ENCODE measurements at regions of chr10 and their contacts with region 1.

Region 1: DNA sequence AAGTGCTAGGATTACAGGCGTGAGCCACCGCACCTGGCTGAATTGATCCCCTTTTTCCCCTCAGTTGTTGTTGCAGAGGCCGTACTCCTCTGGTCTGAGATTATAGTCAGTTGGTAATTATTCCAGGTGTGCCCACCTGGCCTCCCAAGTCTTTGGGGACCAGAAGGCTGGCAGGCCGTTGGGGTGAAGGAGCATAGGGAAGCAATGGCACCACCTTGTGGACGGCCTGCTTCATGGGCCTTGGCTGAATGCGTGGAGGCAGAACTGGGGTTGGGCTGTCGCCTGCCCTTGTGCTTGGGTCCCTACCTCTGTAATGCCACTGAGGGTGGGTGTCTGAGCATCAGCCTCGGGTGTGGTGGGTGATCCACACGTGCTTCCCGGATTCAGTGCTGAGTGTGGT is 125.7 kb downstream of the RGS10 start:
- DNase-seq: peak; percentile 44 to 69 (median 62)
- ATAC-seq: peak; percentile 89
- H3K4me3 ChIP-seq: no peak overlapping the region
- H3K4me3 Mint-ChIP-seq: no peak overlapping the region
- H3K27ac ChIP-seq: no peak overlapping the region
- H3K27ac Mint-ChIP-seq: no peak overlapping the region
- H3K4me1 ChIP-seq: no peaks in the 10 kb centered on the region
- H3K4me1 Mint-ChIP-seq: peaks cover 0 to 5% (median 0%) of the 10 kb centered on the region in 7 donors
- H3K27me3 ChIP-seq: no peaks in the 10 kb centered on the region
- H3K27me3 Mint-ChIP-seq: no peaks in the 10 kb centered on the region

Region 2: DNA sequence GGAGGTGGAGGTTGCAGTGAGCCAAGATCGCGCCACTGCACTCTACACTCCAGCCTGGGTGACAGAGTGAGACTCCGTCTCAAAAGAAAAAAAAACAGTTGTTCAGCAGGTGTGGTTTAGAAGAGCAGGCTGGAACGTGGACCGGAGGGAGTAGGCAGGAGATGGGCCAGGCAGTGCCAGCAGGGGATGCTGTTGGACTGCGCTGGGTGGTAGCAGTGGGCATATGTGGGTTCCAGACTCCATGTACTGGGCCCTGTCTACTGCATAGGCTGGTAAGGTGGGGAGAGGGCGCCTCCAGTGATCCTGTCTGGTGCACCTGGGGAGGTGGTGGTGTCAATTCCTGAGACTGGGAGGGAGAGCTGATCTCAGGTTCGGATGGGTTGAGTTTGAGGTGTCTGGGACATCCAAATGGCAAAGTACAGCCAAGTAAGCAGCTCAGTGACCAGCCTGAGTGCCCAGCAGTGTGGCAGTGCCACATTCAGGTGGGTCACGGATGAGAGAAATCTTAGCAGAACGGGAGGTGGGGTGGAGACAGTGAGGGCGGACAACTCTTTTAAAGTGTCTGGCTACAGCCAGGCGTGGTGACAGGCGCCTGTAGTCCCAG is 277.3 kb before region 1 on chr10:
- CTCF ChIA-PET with region 1: no interaction called
- POLR2A ChIA-PET with region 1: no interaction called
- intact Hi-C with region 1: loop called (anchors 1 kb)
- DNase-seq: peak; percentile 18 to 58 (median 42)
- ATAC-seq: peak; percentile 85
- H3K4me3 ChIP-seq: no peak overlapping the region
- H3K4me3 Mint-ChIP-seq: no peak overlapping the region
- H3K27ac ChIP-seq: no peak overlapping the region
- H3K27ac Mint-ChIP-seq: peak overlapping the region; percentile 49 to 92 (median 62)
- H3K4me1 ChIP-seq: no peaks in the 10 kb centered on the region
- H3K4me1 Mint-ChIP-seq: peaks cover 5 to 26% (median 11%) of the 10 kb centered on the region in 7 donors
- H3K27me3 ChIP-seq: no peaks in the 10 kb centered on the region
- H3K27me3 Mint-ChIP-seq: no peaks in the 10 kb centered on the region

Measured in naive thymus-derived CD4-positive, alpha-beta T cell (primary cell).